ENCODE measurements at regions of chr3 and their contacts with region 1.

Region 1: DNA sequence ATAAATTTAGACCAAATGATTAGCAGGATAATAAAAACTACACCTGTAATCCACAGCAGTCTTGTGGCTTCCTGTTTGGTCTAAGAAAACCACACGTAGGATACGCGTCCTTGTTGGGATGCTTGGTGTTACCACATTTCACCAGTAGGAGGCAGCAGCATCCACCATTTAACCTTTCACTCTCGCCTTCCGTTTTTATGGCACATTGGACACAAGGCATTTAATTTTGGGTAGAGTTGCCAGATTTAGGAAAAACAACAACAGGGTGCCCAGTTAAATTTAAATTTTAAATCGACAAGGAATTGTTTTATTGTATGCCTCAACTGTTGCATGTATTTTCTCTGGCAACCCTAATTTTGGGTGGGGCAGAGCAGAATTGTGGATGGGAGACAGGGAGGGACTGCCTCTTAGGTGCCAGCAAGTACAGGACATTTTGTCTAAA is 6.3 kb downstream of the LRRC31 start:
- DNase-seq: peak in 1 of 2 donors; percentile 67
- ATAC-seq: peak in 7 of 8 donors; percentile 38 to 76 (median 70)
- H3K4me3 ChIP-seq: no peak overlapping the region
- H3K27ac ChIP-seq: no peak overlapping the region
- H3K4me1 ChIP-seq: peaks cover 0 to 9% (median 0%) of the 10 kb centered on the region in 9 donors
- H3K27me3 ChIP-seq: peaks cover 0 to 4% (median 0%) of the 10 kb centered on the region in 7 donors
- CTCF ChIP-seq: peak; percentile 87 to 96 (median 91)

Region 2: DNA sequence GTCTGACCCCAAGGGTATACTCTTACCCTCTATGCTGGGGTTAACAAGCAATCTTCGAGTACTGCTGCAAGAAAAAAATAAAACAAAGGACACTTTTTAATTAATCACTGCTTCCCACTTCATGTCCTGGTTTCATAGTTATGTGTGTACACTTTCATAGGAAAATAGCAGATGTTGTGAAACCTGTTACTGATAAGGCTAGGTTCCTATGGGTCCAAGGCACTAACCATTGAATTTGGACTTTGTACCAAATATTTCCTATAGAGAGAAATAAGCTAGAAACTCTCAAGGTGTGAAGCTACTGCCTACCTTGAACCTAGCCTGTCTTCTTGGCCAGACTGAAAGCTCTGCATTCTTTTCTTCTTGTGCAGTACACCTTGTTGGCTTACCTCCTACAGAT is 159.7 kb after region 1 on chr3:
- intact Hi-C with region 1: loop called in 1 of 10 experiments (anchors 2 kb)
- DNase-seq: no peak
- ATAC-seq: no peak
- H3K4me3 ChIP-seq: no peak overlapping the region
- H3K27ac ChIP-seq: no peak overlapping the region
- H3K4me1 ChIP-seq: no peaks in the 10 kb centered on the region
- H3K27me3 ChIP-seq: no peaks in the 10 kb centered on the region
- CTCF ChIP-seq: no peak

Region 3: GRCh38 chr3:170037463-170038433 is 174.3 kb after region 1 on chr3 and contains the start of gene GPR160:
- intact Hi-C with region 1: loop called in 2 of 10 experiments (anchors 10 kb)
- DNase-seq: peak; percentile 57 to 76
- ATAC-seq: peak; percentile 70 to 92 (median 88)
- H3K4me3 ChIP-seq: peak within 1 kb of the TSS; percentile 49 to 79 (median 66)
- H3K27ac ChIP-seq: peak within 1 kb of the TSS in 3 of 10 donors; percentile 39 to 87 (median 64)
- H3K4me1 ChIP-seq: peaks cover 0 to 23% (median 14%) of the 10 kb centered on the region in 9 donors
- H3K27me3 ChIP-seq: peaks cover 0 to 44% (median 29%) of the 10 kb centered on the region in 7 donors
- CTCF ChIP-seq: peak; percentile 31 to 77 (median 69)
- total RNA-seq, gene GPR160: 0.22 to 1.9 (median 0.79) TPM

Region 4: DNA sequence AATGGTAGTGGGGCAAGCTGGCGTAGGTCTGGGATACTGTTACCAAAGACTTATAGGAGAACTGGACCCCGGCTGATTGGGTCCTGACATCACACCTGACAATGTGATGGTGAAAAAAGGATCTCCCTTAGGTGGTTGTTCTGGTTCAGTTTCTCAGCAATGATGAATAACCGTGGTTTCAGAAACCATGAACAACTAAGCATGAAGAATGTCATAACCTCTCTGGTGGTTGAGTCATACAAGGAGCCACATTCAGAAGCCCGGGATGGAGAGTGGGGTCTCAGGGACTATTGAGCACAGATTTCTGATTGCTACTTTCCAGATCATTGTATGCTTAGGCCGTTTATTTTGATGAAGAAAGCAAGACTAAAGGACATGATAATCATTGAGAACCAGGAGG is 191.7 kb after region 1 on chr3:
- intact Hi-C with region 1: loop called in 1 of 10 experiments (anchors 10 kb)
- DNase-seq: no peak
- ATAC-seq: no peak
- H3K4me3 ChIP-seq: no peak overlapping the region
- H3K27ac ChIP-seq: no peak overlapping the region
- H3K4me1 ChIP-seq: peaks cover 0 to 7% (median 0%) of the 10 kb centered on the region in 9 donors
- H3K27me3 ChIP-seq: no peaks in the 10 kb centered on the region
- CTCF ChIP-seq: no peak